A673 (cell line): ENCODE measurements at regions of chr15 and their contacts with region 1.

Region 1: DNA sequence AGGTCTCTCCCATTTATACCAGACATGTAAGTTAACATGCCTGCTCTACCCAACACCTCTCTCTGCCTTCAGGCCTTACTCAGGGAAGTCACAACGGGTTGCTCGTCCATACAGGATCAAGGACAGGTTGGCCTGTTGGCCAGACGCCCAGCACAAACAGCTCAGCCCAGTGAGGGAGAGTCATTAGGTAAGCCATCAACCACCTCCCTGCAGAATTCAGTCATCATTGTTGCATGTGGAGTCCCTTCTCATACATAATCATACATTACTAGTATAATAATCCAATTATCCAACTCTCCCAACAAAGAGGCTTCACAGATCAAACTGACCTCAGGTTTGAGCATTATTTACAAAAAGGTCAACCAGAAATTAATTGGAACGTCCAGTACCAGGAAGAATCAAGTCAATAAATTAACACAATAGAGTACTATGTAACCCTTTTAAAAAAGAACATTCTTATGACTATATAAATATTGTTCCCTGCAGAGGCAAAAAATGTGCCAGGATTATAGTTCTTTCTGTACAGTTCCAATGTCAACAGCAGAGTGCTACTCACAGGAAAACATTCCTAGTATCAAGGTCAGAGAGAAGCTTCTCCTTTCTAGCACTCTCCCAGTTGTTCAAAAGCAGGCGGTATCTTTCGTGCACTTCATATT is 33.2 kb downstream of the HOMER2 start:
- DNase-seq: no peak
- H3K4me3 ChIP-seq: no peak overlapping the region
- H3K27ac ChIP-seq: no peak overlapping the region
- H3K4me1 ChIP-seq: no peaks in the 10 kb centered on the region
- H3K27me3 ChIP-seq: peaks cover 4% of the 10 kb centered on the region
- CTCF ChIP-seq: no peak

Region 2: GRCh38 chr15:82900511-82901060 is 18.8 kb before region 1 on chr15:
- CTCF ChIA-PET with region 1: no interaction called
- POLR2A ChIA-PET with region 1: interaction called, 13 read pairs
- intact Hi-C with region 1: no loop called
- DNase-seq: no peak
- H3K4me3 ChIP-seq: no peak overlapping the region
- H3K27ac ChIP-seq: no peak overlapping the region
- H3K4me1 ChIP-seq: no peaks in the 10 kb centered on the region
- H3K27me3 ChIP-seq: no peaks in the 10 kb centered on the region
- CTCF ChIP-seq: no peak

Region 3: GRCh38 chr15:82952158-82953081 is 33.1 kb after region 1 on chr15 and contains the start of gene HOMER2:
- CTCF ChIA-PET with region 1: no interaction called
- POLR2A ChIA-PET with region 1: no interaction called
- intact Hi-C with region 1: no loop called
- DNase-seq: peak; percentile 31
- H3K4me3 ChIP-seq: peak within 1 kb of the TSS; percentile 44
- H3K27ac ChIP-seq: no peak within 1 kb of the TSS
- H3K4me1 ChIP-seq: no peaks in the 10 kb centered on the region
- H3K27me3 ChIP-seq: peaks cover 31% of the 10 kb centered on the region
- CTCF ChIP-seq: no peak
- total RNA-seq, gene HOMER2: 4.6 and 6.7 TPM in 2 replicates